ENCODE measurements at regions of chr17 and their contacts with region 1.

Region 1: GRCh38 chr17:63406689-63407330 is 39.3 kb downstream of the CYB561 start:
- DNase-seq: peak; percentile 48 to 55
- ATAC-seq: peak; percentile 81 to 87
- H3K4me3 ChIP-seq: no peak overlapping the region
- H3K27ac ChIP-seq: no peak overlapping the region
- H3K4me1 ChIP-seq: no peaks in the 10 kb centered on the region
- H3K27me3 ChIP-seq: no peaks in the 10 kb centered on the region
- CTCF ChIP-seq: peak; percentile 55 to 82 (median 65)
- POLR2A ChIP-seq: no peak

Region 2: GRCh38 chr17:62703775-62704378 is 702.9 kb before region 1 on chr17:
- in situ Hi-C with region 1: loop called (anchors 5 to 25 kb)
- intact Hi-C with region 1: loop called (anchors 1 kb)
- DNase-seq: peak in 1 of 2 donors; percentile 28
- ATAC-seq: peak; percentile 58 to 82
- H3K4me3 ChIP-seq: peak overlapping the region; percentile 35 to 57 (median 52)
- H3K27ac ChIP-seq: peak overlapping the region in 3 of 4 donors; percentile 30 to 33 (median 31)
- H3K4me1 ChIP-seq: peaks cover 0 to 5% of the 10 kb centered on the region in 2 donors
- H3K27me3 ChIP-seq: peaks cover 6 to 12% (median 10%) of the 10 kb centered on the region in 3 donors
- CTCF ChIP-seq: peak; percentile 60 to 89 (median 74)
- POLR2A ChIP-seq: no peak

Region 3: DNA sequence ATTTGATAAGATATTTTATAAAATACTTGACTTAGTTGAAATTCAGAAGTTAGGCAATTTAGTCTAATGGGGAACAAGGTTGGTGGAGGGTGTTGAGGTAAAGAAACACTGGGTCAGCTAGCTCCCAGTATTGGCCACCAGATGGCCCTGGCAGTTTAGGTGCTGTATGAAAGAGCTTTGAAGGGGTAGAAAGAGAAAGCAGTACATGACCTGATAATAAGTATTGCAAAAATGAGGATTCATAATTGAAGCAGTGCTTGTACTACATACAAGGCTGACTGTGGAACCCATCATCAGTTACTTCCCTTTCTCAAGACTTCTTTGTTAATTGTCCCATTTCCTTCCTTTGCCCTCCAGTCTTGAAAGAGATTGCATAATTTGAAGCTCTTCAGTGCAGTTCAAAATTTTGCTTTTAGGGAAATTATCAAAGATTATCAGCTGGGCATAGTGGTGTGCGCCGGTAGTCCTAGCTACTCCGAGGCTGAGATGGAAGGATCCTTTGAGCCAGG is 411.4 kb before region 1 on chr17:
- in situ Hi-C with region 1: loop called in 1 of 4 experiments (anchors 25 kb)
- intact Hi-C with region 1: no loop called
- DNase-seq: no peak
- ATAC-seq: no peak
- H3K4me3 ChIP-seq: no peak overlapping the region
- H3K27ac ChIP-seq: no peak overlapping the region
- H3K4me1 ChIP-seq: no peaks in the 10 kb centered on the region
- H3K27me3 ChIP-seq: no peaks in the 10 kb centered on the region
- CTCF ChIP-seq: no peak
- POLR2A ChIP-seq: no peak

Region 4: DNA sequence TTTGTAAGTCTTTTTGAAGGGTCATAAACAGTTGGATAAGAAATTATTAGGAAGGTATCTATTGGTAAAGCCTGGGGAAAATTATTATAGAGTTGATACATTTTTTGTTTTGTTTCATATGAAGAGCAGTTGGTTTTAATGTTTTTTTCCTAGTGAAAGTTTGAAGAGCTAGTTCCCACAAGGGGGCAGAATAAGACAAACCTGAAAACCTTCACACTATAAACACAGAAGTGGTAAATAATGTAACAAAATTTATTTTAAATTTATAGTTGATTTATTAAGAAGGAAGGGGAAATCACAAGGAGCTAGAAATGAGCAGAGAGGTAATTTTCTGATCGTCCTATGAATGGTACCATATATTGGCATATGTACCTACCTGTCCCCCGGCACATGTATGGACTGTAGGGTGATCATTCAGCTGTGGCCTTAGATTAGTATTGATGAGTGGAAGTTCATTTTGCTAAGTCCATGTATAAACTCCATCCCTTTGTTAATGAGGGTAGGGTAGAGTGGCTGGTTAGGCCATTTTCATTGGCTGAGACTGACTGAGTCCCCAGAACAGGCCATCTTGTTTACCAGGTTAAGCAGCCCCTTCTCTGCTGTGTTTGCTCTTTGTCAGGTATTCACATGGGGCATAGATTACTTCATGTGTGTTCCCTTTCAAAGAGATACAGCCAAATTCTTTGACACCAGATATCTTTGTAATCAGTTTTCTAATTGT is 324.4 kb before region 1 on chr17:
- in situ Hi-C with region 1: no loop called
- intact Hi-C with region 1: loop called (anchors 2 kb)
- DNase-seq: no peak
- ATAC-seq: no peak
- H3K4me3 ChIP-seq: no peak overlapping the region
- H3K27ac ChIP-seq: no peak overlapping the region
- H3K4me1 ChIP-seq: no peaks in the 10 kb centered on the region
- H3K27me3 ChIP-seq: no peaks in the 10 kb centered on the region
- CTCF ChIP-seq: peak in 2 of 5 experiments; percentile 13 to 21
- POLR2A ChIP-seq: no peak

Measured in gastrocnemius medialis (tissue), 4 donors.